ENCODE measurements at regions of chr10 and their contacts with region 1.

Region 1: GRCh38 chr10:89861584-89862301 is 160.4 kb downstream of the KIF20B start:
- DNase-seq: no peak
- ATAC-seq: peak; percentile 81
- H3K4me3 Mint-ChIP-seq: peak overlapping the region; percentile 22
- H3K27ac Mint-ChIP-seq: peak overlapping the region; percentile 54
- H3K4me1 Mint-ChIP-seq: peaks cover 20% of the 10 kb centered on the region
- H3K27me3 Mint-ChIP-seq: no peaks in the 10 kb centered on the region
- CTCF ChIP-seq: no peak

Region 2: GRCh38 chr10:89653410-89653869 is 208.3 kb before region 1 on chr10:
- CTCF ChIA-PET with region 1: no interaction called
- POLR2A ChIA-PET with region 1: no interaction called
- intact Hi-C with region 1: no loop called
- DNase-seq: no peak
- ATAC-seq: no peak
- H3K4me3 Mint-ChIP-seq: no peak overlapping the region
- H3K27ac Mint-ChIP-seq: peak overlapping the region; percentile 46
- H3K4me1 Mint-ChIP-seq: peaks cover 38% of the 10 kb centered on the region
- H3K27me3 Mint-ChIP-seq: no peaks in the 10 kb centered on the region
- CTCF ChIP-seq: no peak

Region 3: GRCh38 chr10:89837150-89837888 is 24.4 kb before region 1 on chr10:
- CTCF ChIA-PET with region 1: no interaction called
- POLR2A ChIA-PET with region 1: interaction called, 4 read pairs
- intact Hi-C with region 1: loop called (anchors 2 kb)
- DNase-seq: peak; percentile 48
- ATAC-seq: peak; percentile 70
- H3K4me3 Mint-ChIP-seq: peak overlapping the region; percentile 83
- H3K27ac Mint-ChIP-seq: peak overlapping the region; percentile 75
- H3K4me1 Mint-ChIP-seq: peaks cover 15% of the 10 kb centered on the region
- H3K27me3 Mint-ChIP-seq: peaks cover 3% of the 10 kb centered on the region
- CTCF ChIP-seq: no peak

Region 4: DNA sequence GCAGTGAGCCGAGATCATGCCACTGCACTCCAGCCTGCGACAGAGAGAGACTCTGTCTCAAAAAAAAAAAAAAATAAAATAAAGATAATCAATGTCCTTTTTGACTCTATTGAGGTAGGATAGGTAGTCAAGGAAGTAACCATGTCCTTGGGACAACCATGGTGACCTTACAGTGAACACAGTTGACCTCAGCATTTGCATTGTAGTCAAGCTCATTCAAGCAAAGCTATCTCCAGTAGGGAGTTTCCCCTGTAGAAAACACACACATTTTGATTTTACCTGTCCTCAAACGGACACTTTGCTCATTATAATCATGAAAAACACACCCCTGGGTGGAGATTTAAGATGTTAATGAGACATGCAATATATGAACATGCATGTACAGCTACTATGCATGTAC is 11.3 kb after region 1 on chr10:
- CTCF ChIA-PET with region 1: no interaction called
- POLR2A ChIA-PET with region 1: interaction called, 7 read pairs
- intact Hi-C with region 1: loop called (anchors 1 kb)
- DNase-seq: no peak
- ATAC-seq: peak; percentile 91
- H3K4me3 Mint-ChIP-seq: no peak overlapping the region
- H3K27ac Mint-ChIP-seq: no peak overlapping the region
- H3K4me1 Mint-ChIP-seq: peaks cover 21% of the 10 kb centered on the region
- H3K27me3 Mint-ChIP-seq: no peaks in the 10 kb centered on the region
- CTCF ChIP-seq: no peak

Region 5: GRCh38 chr10:90047243-90047729 is 185.5 kb after region 1 on chr10:
- CTCF ChIA-PET with region 1: no interaction called
- POLR2A ChIA-PET with region 1: no interaction called
- intact Hi-C with region 1: loop called (anchors 1 kb)
- DNase-seq: no peak
- ATAC-seq: peak; percentile 82
- H3K4me3 Mint-ChIP-seq: peak overlapping the region; percentile 68
- H3K27ac Mint-ChIP-seq: peak overlapping the region; percentile 94
- H3K4me1 Mint-ChIP-seq: peaks cover 44% of the 10 kb centered on the region
- H3K27me3 Mint-ChIP-seq: no peaks in the 10 kb centered on the region
- CTCF ChIP-seq: no peak

Measured in activated B cell treated with CpG ODN at 0.5 μM for 24 hours (primary cell).